ENCODE measurements at regions of chr4 and their contacts with region 1.

Region 1: DNA sequence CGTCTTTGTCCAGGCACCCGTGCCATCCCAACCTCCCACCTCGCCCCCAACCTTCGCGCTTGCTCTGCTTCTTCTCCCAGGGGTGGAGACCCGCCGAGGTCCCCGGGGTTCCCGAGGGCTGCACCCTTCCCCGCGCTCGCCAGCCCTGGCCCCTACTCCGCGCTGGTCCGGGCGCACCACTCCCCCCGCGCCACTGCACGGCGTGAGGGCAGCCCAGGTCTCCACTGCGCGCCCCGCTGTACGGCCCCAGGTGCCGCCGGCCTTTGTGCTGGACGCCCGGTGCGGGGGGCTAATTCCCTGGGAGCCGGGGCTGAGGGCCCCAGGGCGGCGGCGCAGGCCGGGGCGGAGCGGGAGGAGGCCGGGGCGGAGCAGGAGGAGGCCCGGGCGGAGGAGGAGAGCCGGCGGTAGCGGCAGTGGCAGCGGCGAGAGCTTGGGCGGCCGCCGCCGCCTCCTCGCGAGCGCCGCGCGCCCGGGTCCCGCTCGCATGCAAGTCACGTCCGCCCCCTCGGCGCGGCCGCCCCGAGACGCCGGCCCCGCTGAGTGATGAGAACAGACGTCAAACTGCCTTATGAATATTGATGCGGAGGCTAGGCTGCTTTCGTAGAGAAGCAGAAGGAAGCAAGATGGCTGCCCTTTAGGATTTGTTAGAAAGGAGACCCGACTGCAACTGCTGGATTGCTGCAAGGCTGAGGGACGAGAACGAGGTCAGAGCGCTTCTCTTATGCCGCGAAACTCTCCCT is at the start of gene TET2:
- DNase-seq: peak; percentile 67 to 91 (median 80)
- ATAC-seq: peak; percentile 83
- H3K4me3 ChIP-seq: peak within 1 kb of the TSS; percentile 82 to 100
- H3K4me3 Mint-ChIP-seq: peak within 1 kb of the TSS; percentile 98
- H3K27ac ChIP-seq: peak within 1 kb of the TSS; percentile 85 to 98
- H3K27ac Mint-ChIP-seq: peak within 1 kb of the TSS; percentile 99
- H3K4me1 ChIP-seq: peaks cover 15% of the 10 kb centered on the region
- H3K4me1 Mint-ChIP-seq: peaks cover 43% of the 10 kb centered on the region
- H3K27me3 ChIP-seq: no peaks in the 10 kb centered on the region
- H3K27me3 Mint-ChIP-seq: no peaks in the 10 kb centered on the region
- CTCF ChIP-seq: no peak
- total RNA-seq, gene TET2: 49.8 to 53.9 TPM

Region 2: DNA sequence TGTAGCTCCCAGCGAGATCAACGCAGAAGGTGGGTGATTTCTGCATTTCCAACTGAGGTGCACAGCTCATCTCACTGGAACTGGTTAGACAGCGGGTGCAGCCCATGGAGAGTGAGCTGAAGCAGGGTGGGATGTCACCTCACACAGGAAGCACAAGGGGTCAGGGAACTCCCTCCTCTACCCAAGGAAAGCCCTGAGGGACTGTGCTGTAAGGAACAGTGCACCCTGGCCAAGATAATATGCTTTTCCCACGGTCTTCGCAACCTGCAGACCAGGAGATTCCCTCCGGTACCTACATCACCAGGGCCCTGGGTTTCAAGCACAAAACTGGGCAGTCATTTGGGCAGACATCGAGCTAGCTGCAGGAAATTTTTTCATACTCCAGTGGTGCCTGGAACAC is 216.1 kb before region 1 on chr4:
- CTCF ChIA-PET with region 1: no interaction called
- POLR2A ChIA-PET with region 1: no interaction called
- intact Hi-C with region 1: loop called (anchors 5 kb)
- DNase-seq: peak in 2 of 9 experiments; percentile 3 to 27
- ATAC-seq: no peak
- H3K4me3 ChIP-seq: peak overlapping the region in 1 of 2 experiments; percentile 28
- H3K4me3 Mint-ChIP-seq: no peak overlapping the region
- H3K27ac ChIP-seq: peak overlapping the region in 1 of 2 experiments; percentile 33
- H3K27ac Mint-ChIP-seq: peak overlapping the region; percentile 79
- H3K4me1 ChIP-seq: peaks cover 25% of the 10 kb centered on the region
- H3K4me1 Mint-ChIP-seq: peaks cover 51% of the 10 kb centered on the region
- H3K27me3 ChIP-seq: no peaks in the 10 kb centered on the region
- H3K27me3 Mint-ChIP-seq: no peaks in the 10 kb centered on the region
- CTCF ChIP-seq: no peak

Region 3: GRCh38 chr4:104941661-104942062 is 204.8 kb before region 1 on chr4:
- CTCF ChIA-PET with region 1: no interaction called
- POLR2A ChIA-PET with region 1: no interaction called
- intact Hi-C with region 1: loop called in 1 of 2 experiments (anchors 5 kb)
- DNase-seq: no peak
- ATAC-seq: no peak
- H3K4me3 ChIP-seq: no peak overlapping the region
- H3K4me3 Mint-ChIP-seq: no peak overlapping the region
- H3K27ac ChIP-seq: no peak overlapping the region
- H3K27ac Mint-ChIP-seq: no peak overlapping the region
- H3K4me1 ChIP-seq: peaks cover 42% of the 10 kb centered on the region
- H3K4me1 Mint-ChIP-seq: peaks cover 36% of the 10 kb centered on the region
- H3K27me3 ChIP-seq: no peaks in the 10 kb centered on the region
- H3K27me3 Mint-ChIP-seq: no peaks in the 10 kb centered on the region
- CTCF ChIP-seq: no peak

Region 4: DNA sequence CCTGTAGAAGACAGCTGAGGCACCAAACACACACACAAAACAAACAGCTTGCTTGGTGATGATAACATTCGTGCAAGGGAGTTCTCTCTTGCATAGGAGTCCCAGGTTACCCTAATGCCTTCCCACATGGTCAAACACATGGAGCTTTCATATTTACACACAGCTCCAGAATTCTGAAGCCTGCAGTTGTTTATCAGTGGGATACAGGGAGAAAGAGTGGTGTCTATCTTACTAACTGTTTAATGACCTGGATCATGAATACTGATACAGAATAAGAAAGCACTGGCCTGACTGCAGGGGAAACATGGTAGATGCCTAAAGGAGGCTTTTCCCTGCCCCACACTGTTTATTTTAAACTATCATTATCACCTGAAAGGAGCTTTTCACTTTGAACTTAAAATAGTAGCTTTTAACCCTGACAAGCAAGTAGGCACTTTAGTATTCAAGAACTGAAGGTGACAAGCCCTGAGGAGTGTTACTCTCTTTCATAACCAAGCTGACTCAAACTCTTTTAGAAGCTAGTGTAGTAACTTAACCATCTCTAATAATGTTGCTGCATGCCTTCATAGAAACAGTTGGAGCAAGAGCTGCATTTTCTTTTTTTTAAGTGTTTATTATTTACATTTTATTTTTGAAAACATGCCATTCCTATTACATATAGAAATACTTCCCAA is 15.8 kb after region 1 on chr4:
- CTCF ChIA-PET with region 1: no interaction called
- POLR2A ChIA-PET with region 1: interaction called, 4 read pairs
- intact Hi-C with region 1: loop called in 1 of 2 experiments (anchors 2 kb)
- DNase-seq: no peak
- ATAC-seq: no peak
- H3K4me3 ChIP-seq: no peak overlapping the region
- H3K4me3 Mint-ChIP-seq: no peak overlapping the region
- H3K27ac ChIP-seq: no peak overlapping the region
- H3K27ac Mint-ChIP-seq: no peak overlapping the region
- H3K4me1 ChIP-seq: peaks cover 6% of the 10 kb centered on the region
- H3K4me1 Mint-ChIP-seq: peaks cover 38% of the 10 kb centered on the region
- H3K27me3 ChIP-seq: no peaks in the 10 kb centered on the region
- H3K27me3 Mint-ChIP-seq: no peaks in the 10 kb centered on the region
- CTCF ChIP-seq: no peak

Region 5: GRCh38 chr4:105191621-105192210 is 45.3 kb after region 1 on chr4:
- CTCF ChIA-PET with region 1: no interaction called
- POLR2A ChIA-PET with region 1: no interaction called
- intact Hi-C with region 1: loop called in 1 of 2 experiments (anchors 2 kb)
- DNase-seq: no peak
- ATAC-seq: no peak
- H3K4me3 ChIP-seq: no peak overlapping the region
- H3K4me3 Mint-ChIP-seq: no peak overlapping the region
- H3K27ac ChIP-seq: no peak overlapping the region
- H3K27ac Mint-ChIP-seq: no peak overlapping the region
- H3K4me1 ChIP-seq: no peaks in the 10 kb centered on the region
- H3K4me1 Mint-ChIP-seq: peaks cover 45% of the 10 kb centered on the region
- H3K27me3 ChIP-seq: no peaks in the 10 kb centered on the region
- H3K27me3 Mint-ChIP-seq: no peaks in the 10 kb centered on the region
- CTCF ChIP-seq: no peak

Region 6: DNA sequence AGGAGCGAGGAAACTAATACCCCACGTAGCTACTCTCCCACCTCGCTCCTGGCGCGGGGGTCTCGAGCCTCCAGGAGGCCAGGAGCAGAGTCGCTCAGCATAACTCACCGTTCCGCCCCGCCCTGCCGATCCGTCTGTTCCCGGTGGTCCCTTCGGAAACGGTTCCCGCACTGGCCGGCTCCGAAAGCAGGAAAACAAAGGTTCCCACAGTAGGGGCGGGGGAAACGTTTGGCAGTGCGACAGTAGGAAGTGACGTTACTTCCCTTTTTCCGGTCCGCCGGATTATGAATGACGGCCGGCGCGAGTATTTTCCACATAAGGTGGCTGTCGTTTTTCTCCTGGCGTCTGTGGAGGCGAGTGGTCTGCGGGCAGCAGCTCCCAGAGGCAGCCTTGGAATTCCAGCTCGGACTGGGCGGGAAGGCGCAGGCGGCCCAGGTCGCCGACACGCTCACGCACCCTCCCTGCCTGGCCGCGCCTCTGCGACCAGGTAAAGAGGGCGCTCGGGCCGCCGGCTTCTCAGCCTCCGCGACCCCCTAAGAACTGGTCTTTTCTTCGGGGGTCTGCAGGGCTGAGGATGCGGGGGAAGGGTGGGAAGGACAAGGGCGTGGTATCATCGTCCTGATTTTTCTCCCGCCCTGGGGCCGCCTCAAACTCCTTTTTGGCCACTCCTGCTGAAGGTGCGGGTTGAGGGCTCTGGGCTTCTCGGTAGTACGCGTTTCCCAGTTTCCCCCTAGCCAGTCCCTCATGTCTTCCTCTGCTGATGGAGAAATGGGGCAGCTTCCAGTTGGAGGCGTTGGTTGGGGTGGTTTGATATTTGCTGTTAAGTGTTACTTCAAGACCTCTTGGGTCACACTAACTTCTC is 562.3 kb after region 1 on chr4 and contains the starts of genes GSTCD and INTS12:
- CTCF ChIA-PET with region 1: no interaction called
- POLR2A ChIA-PET with region 1: no interaction called
- intact Hi-C with region 1: loop called (anchors 1 to 2 kb)
- DNase-seq: peak; percentile 82 to 94 (median 88)
- ATAC-seq: peak; percentile 91
- H3K4me3 ChIP-seq: peak within 1 kb of the TSS; percentile 69 to 96
- H3K4me3 Mint-ChIP-seq: peak within 1 kb of the TSS; percentile 100
- H3K27ac ChIP-seq: peak within 1 kb of the TSS; percentile 68 to 79
- H3K27ac Mint-ChIP-seq: peak within 1 kb of the TSS; percentile 98
- H3K4me1 ChIP-seq: peaks cover 24% of the 10 kb centered on the region
- H3K4me1 Mint-ChIP-seq: peaks cover 36% of the 10 kb centered on the region
- H3K27me3 ChIP-seq: no peaks in the 10 kb centered on the region
- H3K27me3 Mint-ChIP-seq: no peaks in the 10 kb centered on the region
- CTCF ChIP-seq: no peak
- total RNA-seq, gene GSTCD: 2.9 to 5.8 TPM
- total RNA-seq, gene INTS12: 23.9 to 24.8 TPM

Region 7: DNA sequence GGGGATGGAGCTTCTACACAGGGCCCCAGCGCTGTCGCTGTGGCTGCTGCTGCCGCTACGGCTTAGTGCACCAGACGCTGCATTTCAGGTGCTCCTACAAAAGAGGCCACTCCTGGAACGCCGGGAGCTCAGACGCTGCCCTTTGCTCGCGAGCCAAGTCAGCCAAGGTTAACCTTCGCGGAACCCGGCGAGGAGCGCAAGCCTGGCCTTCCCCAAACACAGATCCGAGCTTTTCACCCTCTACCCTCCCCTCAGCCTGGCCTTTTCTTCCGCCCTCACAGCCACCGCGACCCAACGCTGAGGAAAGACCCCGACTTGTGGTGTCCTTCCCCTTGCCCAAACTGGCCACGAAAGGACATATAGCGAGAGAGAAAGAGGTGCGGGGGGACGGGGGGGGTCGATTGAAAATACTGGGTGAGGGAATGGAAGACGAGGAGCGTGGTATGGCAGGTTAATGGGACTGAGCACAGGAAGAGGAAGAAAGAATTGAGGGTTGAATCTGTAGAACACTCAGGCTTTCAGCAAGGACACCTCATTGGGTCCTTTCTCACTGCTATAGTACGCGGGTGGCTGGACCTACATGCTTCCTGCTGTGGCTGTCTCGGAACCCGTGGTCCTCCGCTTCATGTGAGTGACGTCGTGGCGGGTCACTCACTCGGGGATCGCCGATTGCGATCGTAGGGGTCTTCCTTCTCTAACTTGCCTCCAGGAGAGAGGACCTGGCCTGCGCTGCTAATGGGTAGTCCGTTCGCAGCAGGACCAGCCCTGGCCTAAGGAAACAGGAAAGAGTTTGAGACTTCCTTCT is 1169.7 kb after region 1 on chr4 and contains the starts of genes AIMP1 and TBCK:
- CTCF ChIA-PET with region 1: no interaction called
- POLR2A ChIA-PET with region 1: no interaction called
- intact Hi-C with region 1: loop called (anchors 5 kb)
- DNase-seq: peak; percentile 81 to 95 (median 90)
- ATAC-seq: peak; percentile 85
- H3K4me3 ChIP-seq: peak within 1 kb of the TSS; percentile 72 to 85
- H3K4me3 Mint-ChIP-seq: no peak within 1 kb of the TSS
- H3K27ac ChIP-seq: peak within 1 kb of the TSS; percentile 89 to 96
- H3K27ac Mint-ChIP-seq: no peak within 1 kb of the TSS
- H3K4me1 ChIP-seq: peaks cover 19% of the 10 kb centered on the region
- H3K4me1 Mint-ChIP-seq: peaks cover 42% of the 10 kb centered on the region
- H3K27me3 ChIP-seq: no peaks in the 10 kb centered on the region
- H3K27me3 Mint-ChIP-seq: no peaks in the 10 kb centered on the region
- CTCF ChIP-seq: no peak
- total RNA-seq, gene AIMP1: 69.3 to 79.2 TPM
- total RNA-seq, gene TBCK: 17.4 to 20.4 TPM